ENCODE measurements at regions of chr20 and their contacts with region 1.

Region 1: GRCh38 chr20:12207875-12208274 is 290.2 kb downstream of the BTBD3 start:
- DNase-seq: peak; percentile 26 to 69
- H3K4me3 ChIP-seq: no peak overlapping the region
- H3K4me1 ChIP-seq: no peaks in the 10 kb centered on the region
- H3K27me3 ChIP-seq: no peaks in the 10 kb centered on the region

Region 2: GRCh38 chr20:11676630-11677284 is 531.1 kb before region 1 on chr20:
- in situ Hi-C with region 1: loop called (anchors 25 kb)
- DNase-seq: peak; percentile 23 to 75
- H3K4me3 ChIP-seq: no peak overlapping the region
- H3K4me1 ChIP-seq: no peaks in the 10 kb centered on the region
- H3K27me3 ChIP-seq: peaks cover 6% of the 10 kb centered on the region; the same call in 1 of the 2 replicates

Measured in HAP-1 (cell line).